ENCODE measurements at regions of chr18 and their contacts with region 1.

Region 1: GRCh38 chr18:79246348-79247108 is 149.2 kb upstream of the NFATC1 start:
- DNase-seq: peak; percentile 64
- H3K4me3 Mint-ChIP-seq: peak overlapping the region; percentile 17
- H3K27ac Mint-ChIP-seq: no peak overlapping the region
- H3K4me1 Mint-ChIP-seq: peaks cover 7% of the 10 kb centered on the region
- H3K27me3 Mint-ChIP-seq: no peaks in the 10 kb centered on the region

Region 2: DNA sequence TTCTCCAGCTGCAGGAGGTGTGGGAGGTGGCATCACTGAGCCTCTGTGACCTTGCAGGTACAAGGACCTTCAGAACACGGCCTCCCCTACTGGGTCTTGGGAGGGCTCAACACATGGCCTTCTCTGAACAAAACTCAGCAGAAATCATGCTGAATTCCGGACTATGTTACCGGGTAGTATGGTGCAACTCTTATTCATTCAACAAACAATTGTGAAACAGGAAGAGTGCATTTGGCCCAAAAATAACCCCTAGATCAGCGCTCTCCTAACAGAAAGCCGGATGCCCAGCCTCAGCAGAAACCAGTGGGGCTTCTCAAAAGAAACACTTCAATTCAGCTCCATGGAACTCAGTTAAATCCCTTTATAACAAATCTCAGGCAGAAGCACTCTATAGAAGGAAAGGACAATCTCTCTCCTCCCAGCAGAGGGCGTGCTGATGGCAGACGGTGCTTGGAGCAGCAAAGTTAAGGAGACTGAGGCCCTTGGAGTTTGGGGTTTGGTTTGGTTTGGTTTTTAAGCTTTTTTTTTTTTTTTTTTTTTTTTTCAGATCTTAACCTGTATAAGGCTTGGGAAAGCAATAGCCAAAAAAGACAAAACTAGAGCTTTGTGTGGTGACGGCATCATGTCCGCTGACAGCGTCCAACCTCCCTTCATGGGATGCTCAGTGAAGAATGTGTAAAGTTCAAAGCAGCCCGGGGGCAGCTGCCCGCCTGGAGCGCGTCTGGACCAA is 371.1 kb before region 1 on chr18:
- intact Hi-C with region 1: loop called (anchors 5 kb)
- DNase-seq: no peak
- H3K4me3 Mint-ChIP-seq: no peak overlapping the region
- H3K27ac Mint-ChIP-seq: no peak overlapping the region
- H3K4me1 Mint-ChIP-seq: no peaks in the 10 kb centered on the region
- H3K27me3 Mint-ChIP-seq: peaks cover 1% of the 10 kb centered on the region

Region 3: DNA sequence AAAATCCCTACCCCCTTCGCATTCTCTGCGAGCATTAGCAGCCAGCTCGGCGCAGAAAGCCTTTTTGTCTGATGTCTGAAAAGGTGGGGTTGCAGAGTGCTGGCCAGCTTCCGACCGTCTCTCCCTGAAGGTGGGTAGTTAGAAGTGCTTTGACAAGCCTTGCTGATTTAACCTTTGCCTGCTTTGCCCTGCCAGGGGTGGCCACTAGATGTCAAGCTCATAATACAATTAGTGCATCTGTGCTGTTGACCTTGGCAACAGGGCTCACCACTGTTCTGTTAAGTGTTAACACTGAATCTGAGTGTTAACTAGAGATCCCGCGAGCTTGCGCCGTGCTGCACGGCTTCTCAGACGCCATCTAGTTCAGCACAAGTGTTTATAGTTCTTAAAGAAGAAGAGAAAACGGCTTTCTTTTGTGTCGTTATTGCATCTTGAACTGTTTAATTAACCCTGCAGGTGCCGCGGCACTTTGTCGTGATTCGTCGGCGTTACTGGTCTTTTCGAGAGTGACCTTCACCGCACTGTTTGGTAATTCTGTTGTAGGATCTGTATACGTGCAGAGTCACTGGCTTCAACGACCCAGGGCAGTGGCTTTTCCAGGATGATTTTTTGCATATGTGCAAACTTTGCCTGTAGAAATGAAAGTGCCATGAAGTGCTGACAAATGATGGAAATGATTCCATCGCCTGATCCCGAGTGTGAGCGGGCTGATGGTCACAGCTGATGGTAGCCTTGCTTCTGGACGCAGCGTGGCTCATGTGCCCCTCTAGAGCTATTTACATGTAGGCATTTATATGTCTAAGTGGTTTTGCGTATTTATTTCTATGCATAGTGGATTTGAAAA is 261.4 kb before region 1 on chr18:
- intact Hi-C with region 1: loop called (anchors 1 kb)
- DNase-seq: no peak
- H3K4me3 Mint-ChIP-seq: no peak overlapping the region
- H3K27ac Mint-ChIP-seq: no peak overlapping the region
- H3K4me1 Mint-ChIP-seq: peaks cover 5% of the 10 kb centered on the region
- H3K27me3 Mint-ChIP-seq: peaks cover 67% of the 10 kb centered on the region

Region 4: DNA sequence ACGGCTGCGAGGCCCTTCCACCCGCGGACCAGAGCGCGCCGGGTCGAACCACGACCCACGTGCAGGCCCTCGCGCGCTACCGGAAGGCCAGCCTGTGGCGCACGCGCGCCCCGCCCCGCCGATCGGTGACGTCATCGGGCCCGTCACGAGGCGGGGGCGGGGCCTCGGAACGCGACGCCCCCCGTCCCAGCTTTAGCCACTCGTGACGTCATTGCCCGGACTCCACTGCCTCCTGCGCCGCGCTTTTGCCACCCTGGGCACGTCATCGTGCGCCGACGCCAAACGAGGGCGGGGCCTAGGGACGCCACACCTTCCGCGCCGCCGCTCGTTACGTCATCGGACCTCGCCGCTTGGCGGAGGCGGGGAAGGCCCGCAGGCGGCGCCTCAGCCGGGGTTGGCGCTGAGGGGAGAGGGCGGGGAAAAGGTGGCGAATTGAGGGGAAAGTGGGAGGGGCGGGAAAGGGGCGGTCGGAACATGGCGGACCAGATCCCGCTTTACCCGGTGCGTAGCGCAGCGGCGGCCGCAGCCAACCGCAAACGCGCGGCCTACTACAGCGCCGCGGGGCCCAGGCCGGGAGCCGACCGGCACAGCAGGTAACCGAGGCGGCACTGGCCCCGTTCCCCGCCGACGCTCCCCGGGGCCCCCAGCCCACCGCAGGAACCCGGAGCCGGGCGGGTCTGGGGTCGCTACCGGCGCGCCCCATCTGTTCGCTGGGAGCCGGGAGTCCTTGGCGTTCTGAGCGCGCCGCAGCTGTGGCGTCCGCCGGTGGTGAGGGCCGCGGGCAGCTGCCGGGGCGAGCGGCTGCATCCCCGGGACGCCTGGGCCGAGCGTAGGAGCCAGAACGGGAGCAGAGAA is 177.4 kb before region 1 on chr18 and contains the start of gene ATP9B:
- intact Hi-C with region 1: loop called (anchors 10 kb)
- DNase-seq: peak; percentile 98
- H3K4me3 Mint-ChIP-seq: peak within 1 kb of the TSS; percentile 87
- H3K27ac Mint-ChIP-seq: peak within 1 kb of the TSS; percentile 98
- H3K4me1 Mint-ChIP-seq: peaks cover 26% of the 10 kb centered on the region
- H3K27me3 Mint-ChIP-seq: peaks cover 20% of the 10 kb centered on the region
- total RNA-seq, gene ATP9B: 27.6 and 29.8 TPM in 2 replicates

Region 5: DNA sequence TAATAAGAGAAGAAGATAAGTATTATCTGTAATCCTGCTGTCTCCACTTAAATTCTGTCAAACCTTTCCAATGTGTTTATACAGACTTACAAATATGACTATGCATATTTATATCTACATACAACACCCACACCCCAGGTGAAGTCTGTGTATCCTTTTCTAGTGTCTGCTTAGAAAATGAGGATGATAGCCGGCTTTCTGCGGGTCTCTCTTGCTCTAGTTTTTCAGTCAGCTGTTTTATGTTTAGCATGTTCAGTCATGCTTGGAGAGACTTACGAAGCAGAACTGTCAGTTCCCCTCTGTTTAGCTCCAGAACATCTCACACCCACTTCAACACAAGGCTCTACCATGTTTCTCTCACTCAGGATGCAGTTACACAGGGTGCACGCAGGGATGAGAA is 11.9 kb after region 1 on chr18:
- intact Hi-C with region 1: no loop called
- DNase-seq: no peak
- H3K4me3 Mint-ChIP-seq: no peak overlapping the region
- H3K27ac Mint-ChIP-seq: no peak overlapping the region
- H3K4me1 Mint-ChIP-seq: no peaks in the 10 kb centered on the region
- H3K27me3 Mint-ChIP-seq: no peaks in the 10 kb centered on the region

Measured in activated T-helper 2 cell treated with anti-CD3 and anti-CD28 coated beads, Interferon-gamma antibody, Interleukin-2, Interleukin-4, amounts not matched to agents 10 μg/mL and 5 μg/mL and 100 μg/mL, durations not matched to agents 14 hours and 24 hours and 36 hours (primary cell).